Activated CD8-positive, alpha-beta memory T cell treated with anti-CD3 and anti-CD28 coated beads, Interleukin-2, amount 10 ng/mL, durations not matched to agents 7 days and 5 days (primary cell): ENCODE measurements at regions of chr11 and their contacts with region 1.

Region 1: GRCh38 chr11:64767344-64768299 is 7.8 kb upstream of the PYGM start:
- DNase-seq: peak; percentile 90
- ATAC-seq: peak; percentile 37
- H3K4me3 Mint-ChIP-seq: no peak overlapping the region
- H3K27ac Mint-ChIP-seq: peak overlapping the region; percentile 79
- H3K4me1 Mint-ChIP-seq: peaks cover 82% of the 10 kb centered on the region
- H3K27me3 Mint-ChIP-seq: no peaks in the 10 kb centered on the region

Region 2: GRCh38 chr11:64752175-64752970 is 15.2 kb before region 1 on chr11:
- CTCF ChIA-PET with region 1: interaction called, 294 read pairs
- DNase-seq: no peak
- ATAC-seq: no peak
- H3K4me3 Mint-ChIP-seq: no peak overlapping the region
- H3K27ac Mint-ChIP-seq: peak overlapping the region; percentile 6
- H3K4me1 Mint-ChIP-seq: peaks cover 5% of the 10 kb centered on the region
- H3K27me3 Mint-ChIP-seq: no peaks in the 10 kb centered on the region

Region 3: GRCh38 chr11:64778508-64779346 is 11.1 kb after region 1 on chr11 and contains the start of gene SF1:
- CTCF ChIA-PET with region 1: interaction called, 22 read pairs
- DNase-seq: peak; percentile 100
- ATAC-seq: peak; percentile 88
- H3K4me3 Mint-ChIP-seq: peak within 1 kb of the TSS; percentile 97
- H3K27ac Mint-ChIP-seq: peak within 1 kb of the TSS; percentile 98
- H3K4me1 Mint-ChIP-seq: peaks cover 55% of the 10 kb centered on the region
- H3K27me3 Mint-ChIP-seq: peaks cover 3% of the 10 kb centered on the region
- total RNA-seq, gene SF1: 442 to 462 TPM

Region 4: GRCh38 chr11:64887757-64888405 is 120.3 kb after region 1 on chr11:
- CTCF ChIA-PET with region 1: no interaction called
- DNase-seq: peak; percentile 87
- ATAC-seq: peak; percentile 94
- H3K4me3 Mint-ChIP-seq: peak overlapping the region; percentile 65
- H3K27ac Mint-ChIP-seq: peak overlapping the region; percentile 84
- H3K4me1 Mint-ChIP-seq: peaks cover 38% of the 10 kb centered on the region
- H3K27me3 Mint-ChIP-seq: no peaks in the 10 kb centered on the region

Region 5: DNA sequence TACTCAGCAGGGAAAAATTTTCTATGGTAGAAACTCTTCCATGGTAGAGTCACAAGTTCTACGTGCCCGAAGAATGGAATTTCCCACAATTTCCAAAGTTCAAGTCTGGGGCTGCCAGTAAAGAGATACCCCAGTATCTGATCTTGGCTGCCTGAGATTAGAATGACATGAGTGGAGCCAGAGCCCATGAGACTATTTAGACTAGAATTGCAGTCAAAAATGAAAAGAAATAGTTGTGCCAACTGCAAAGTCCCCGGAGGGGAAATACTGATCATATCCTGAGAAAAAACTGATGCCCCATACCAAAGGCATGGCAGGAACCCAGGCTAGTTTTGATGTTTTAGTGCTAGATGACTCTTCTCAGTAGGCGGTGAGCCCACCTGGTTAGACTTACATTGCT is 193.1 kb after region 1 on chr11:
- CTCF ChIA-PET with region 1: no interaction called
- DNase-seq: no peak
- ATAC-seq: no peak
- H3K4me3 Mint-ChIP-seq: no peak overlapping the region
- H3K27ac Mint-ChIP-seq: no peak overlapping the region
- H3K4me1 Mint-ChIP-seq: peaks cover 6% of the 10 kb centered on the region
- H3K27me3 Mint-ChIP-seq: peaks cover 7% of the 10 kb centered on the region